Activated T-helper 1 cell treated with anti-CD3 and anti-CD28 coated beads, Interleukin-12 subunit alpha, Interleukin-12 subunit beta, Interleukin-2, Interleukin-4 antibody, amounts not matched to agents 30 ng/mL and 10 ng/mL and 1 ng/mL, durations not matched to agents 14 hours and 24 hours and 36 hours (primary cell): ENCODE measurements at regions of chr13 and their contacts with region 1.

Region 1: GRCh38 chr13:99018418-99019180 is 40.7 kb upstream of the DOCK9 start:
- DNase-seq: no peak
- H3K4me3 Mint-ChIP-seq: no peak overlapping the region
- H3K27ac Mint-ChIP-seq: peak overlapping the region; percentile 54
- H3K4me1 Mint-ChIP-seq: peaks cover 46% of the 10 kb centered on the region
- H3K27me3 Mint-ChIP-seq: no peaks in the 10 kb centered on the region

Region 2: DNA sequence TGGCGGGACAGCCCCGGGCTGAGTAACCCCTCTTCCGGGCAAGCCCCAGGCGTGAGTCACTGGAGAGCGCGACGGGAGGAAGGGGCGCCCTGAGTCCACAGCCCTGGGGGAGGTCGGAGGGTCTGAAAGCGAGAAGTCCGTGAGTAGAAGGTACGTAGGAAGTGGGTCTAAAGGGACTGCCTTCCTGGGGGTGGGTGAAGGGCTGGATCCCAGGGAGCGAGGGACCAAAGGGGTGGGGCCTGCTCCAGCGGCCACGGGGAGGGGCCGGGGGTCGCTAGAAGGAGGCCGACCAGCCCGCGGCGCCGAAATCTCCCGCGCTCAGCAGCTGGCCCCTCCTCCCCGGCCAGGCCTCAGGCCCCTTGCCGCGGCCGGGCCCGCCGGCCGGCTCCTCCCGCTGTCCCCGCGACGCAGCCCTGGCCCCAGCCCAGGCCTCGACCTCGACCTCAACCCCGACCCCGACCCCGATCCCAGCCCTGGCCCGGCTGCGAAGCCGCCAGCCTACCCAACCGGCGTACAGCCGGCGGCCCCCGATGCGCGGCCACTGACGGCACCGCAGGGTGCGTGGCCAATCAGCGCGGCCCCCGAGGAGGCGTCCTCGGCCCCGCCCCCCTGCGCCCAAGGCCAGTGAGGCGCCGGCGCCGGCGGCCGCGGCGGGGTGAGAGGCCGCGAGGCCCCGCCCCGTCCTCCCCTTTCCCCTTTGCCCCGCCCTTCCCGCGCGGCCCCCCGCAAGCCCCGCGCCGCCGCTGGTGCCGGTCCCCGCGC is 1042.6 kb before region 1 on chr13:
- intact Hi-C with region 1: no loop called
- DNase-seq: peak; percentile 88
- H3K4me3 Mint-ChIP-seq: peak overlapping the region; percentile 93
- H3K27ac Mint-ChIP-seq: peak overlapping the region; percentile 98
- H3K4me1 Mint-ChIP-seq: peaks cover 33% of the 10 kb centered on the region
- H3K27me3 Mint-ChIP-seq: peaks cover 13% of the 10 kb centered on the region

Region 3: GRCh38 chr13:98930151-98930591 is 88.4 kb before region 1 on chr13:
- intact Hi-C with region 1: loop called (anchors 5 kb)
- DNase-seq: no peak
- H3K4me3 Mint-ChIP-seq: peak overlapping the region; percentile 60
- H3K27ac Mint-ChIP-seq: peak overlapping the region; percentile 84
- H3K4me1 Mint-ChIP-seq: peaks cover 7% of the 10 kb centered on the region
- H3K27me3 Mint-ChIP-seq: peaks cover 2% of the 10 kb centered on the region

Region 4: DNA sequence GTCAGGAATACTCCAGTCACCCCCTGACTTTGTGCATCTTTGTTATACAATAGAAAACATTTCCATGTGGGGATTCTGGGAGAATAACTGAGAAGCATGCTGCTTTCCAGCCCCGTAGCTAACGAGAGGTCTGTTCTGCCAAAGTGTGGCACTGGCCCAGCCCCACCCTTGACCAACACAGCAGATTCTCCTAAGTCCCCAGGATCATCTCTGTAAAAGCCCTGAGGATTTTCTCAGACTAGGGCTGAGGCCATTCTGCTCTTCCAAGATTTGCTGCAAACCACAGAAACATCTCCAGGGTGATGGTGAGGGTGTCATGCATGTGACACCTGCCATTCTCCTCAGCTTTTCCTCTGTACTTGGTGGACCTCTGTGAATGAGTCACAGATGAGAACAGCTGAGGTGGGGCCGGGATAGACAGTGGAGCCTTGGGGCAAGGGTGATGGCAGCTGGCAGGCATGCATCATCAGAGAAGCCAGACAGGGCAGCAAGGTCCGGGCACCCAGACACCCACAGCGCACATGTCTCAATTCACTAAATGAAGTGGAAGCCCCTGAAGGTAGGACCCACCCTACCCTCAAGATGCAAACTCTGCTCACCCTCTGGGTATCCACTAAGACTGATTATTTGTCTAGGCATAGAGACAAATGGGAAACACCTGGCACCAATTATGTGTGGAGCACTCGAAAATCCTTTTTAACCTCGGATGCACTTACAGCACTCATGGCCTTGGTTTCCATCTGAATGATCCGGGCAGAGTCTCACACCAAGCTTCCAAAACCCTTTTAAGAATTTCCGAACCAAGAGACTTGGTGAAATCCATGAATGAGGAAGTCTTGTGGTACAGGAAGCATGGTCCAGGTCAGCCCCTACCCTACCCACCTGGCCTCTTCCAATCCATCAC is 20.6 kb before region 1 on chr13:
- intact Hi-C with region 1: loop called (anchors 2 kb)
- DNase-seq: no peak
- H3K4me3 Mint-ChIP-seq: no peak overlapping the region
- H3K27ac Mint-ChIP-seq: no peak overlapping the region
- H3K4me1 Mint-ChIP-seq: peaks cover 73% of the 10 kb centered on the region
- H3K27me3 Mint-ChIP-seq: no peaks in the 10 kb centered on the region